Thyroid gland (tissue), 4 donors: ENCODE measurements at regions of chr18 and their contacts with region 1.

Region 1: GRCh38 chr18:70431203-70431624 is 142.4 kb downstream of the SOCS6 start:
- DNase-seq: no peak
- H3K4me3 ChIP-seq: no peak overlapping the region
- H3K27ac ChIP-seq: no peak overlapping the region
- H3K4me1 ChIP-seq: no peaks in the 10 kb centered on the region
- H3K27me3 ChIP-seq: no peaks in the 10 kb centered on the region
- CTCF ChIP-seq: no peak
- POLR2A ChIP-seq: no peak

Region 2: GRCh38 chr18:70195852-70196434 is 235.3 kb before region 1 on chr18:
- intact Hi-C with region 1: loop called (anchors 5 kb)
- DNase-seq: peak in 1 of 2 donors; percentile 8
- H3K4me3 ChIP-seq: no peak overlapping the region
- H3K27ac ChIP-seq: no peak overlapping the region
- H3K4me1 ChIP-seq: no peaks in the 10 kb centered on the region
- H3K27me3 ChIP-seq: no peaks in the 10 kb centered on the region
- CTCF ChIP-seq: peak; percentile 23 to 75 (median 62)
- POLR2A ChIP-seq: no peak

Region 3: GRCh38 chr18:70732188-70732587 is 301.0 kb after region 1 on chr18:
- intact Hi-C with region 1: no loop called
- DNase-seq: no peak
- H3K4me3 ChIP-seq: no peak overlapping the region
- H3K27ac ChIP-seq: no peak overlapping the region
- H3K4me1 ChIP-seq: no peaks in the 10 kb centered on the region
- H3K27me3 ChIP-seq: no peaks in the 10 kb centered on the region
- CTCF ChIP-seq: no peak
- POLR2A ChIP-seq: no peak